Dorsolateral prefrontal cortex (tissue), 120 donors: ENCODE measurements at regions of chr4 and their contacts with region 1.

Region 1: DNA sequence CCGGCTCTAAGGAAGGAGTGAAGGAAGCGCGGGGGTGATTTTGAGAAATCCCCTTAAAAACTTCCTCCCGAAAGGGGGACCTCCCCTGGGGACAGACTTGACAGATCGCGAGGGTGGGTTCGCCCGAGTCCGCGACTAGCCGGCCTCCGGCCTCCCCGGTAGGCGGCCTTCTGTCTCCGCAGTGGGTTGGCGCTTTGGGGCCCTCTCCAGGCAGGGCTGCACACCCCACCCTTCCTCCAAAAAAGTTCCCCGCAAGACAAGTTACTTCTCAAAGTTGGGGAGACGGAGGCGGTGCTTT is 24.8 kb downstream of the HOPX start:
- DNase-seq: peak in 3 of 10 donors; percentile 26 to 51 (median 44)
- H3K4me3 ChIP-seq: peak overlapping the region; percentile 35 to 78 (median 65)
- H3K27ac ChIP-seq: peak overlapping the region in 57 of 59 donors; percentile 21 to 95 (median 82)
- H3K27me3 ChIP-seq: peaks cover 0 to 40% (median 0%) of the 10 kb centered on the region in 45 donors
- CTCF ChIP-seq: peak in 25 of 56 donors; percentile 7 to 37 (median 15)

Region 2: DNA sequence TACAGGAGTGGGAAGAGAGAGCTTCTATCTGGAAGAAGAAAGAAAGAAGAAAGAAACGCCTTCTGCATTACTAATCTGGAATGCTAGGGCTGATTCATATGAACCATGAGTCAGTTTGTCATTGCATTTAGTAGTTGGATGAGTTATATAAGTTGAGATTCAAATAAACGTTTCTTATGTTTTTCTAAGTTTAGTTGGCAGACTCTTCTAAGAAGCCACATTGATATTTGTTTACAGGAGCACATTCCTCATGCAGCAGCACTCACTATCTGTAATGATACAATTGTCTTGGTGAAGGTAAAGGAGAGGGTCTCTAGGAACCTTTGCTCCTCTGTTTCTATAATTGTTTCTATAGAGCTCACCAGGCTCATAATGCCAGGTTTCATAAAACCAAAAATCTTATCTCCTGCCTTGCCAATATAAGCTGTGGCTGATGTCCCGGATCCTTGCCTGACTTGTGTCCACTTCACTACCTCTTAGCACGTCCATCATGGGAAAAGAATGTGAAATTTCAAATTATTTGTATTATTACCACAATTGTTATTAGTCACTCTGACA is 14.7 kb before region 1 on chr4:
- intact Hi-C with region 1: loop called in 1 of 2 experiments (anchors 2 kb)
- DNase-seq: no peak
- H3K4me3 ChIP-seq: no peak overlapping the region
- H3K27ac ChIP-seq: peak overlapping the region in 20 of 59 donors; percentile 2 to 83 (median 57)
- H3K27me3 ChIP-seq: no peaks in the 10 kb centered on the region
- CTCF ChIP-seq: peak in 1 of 56 donors; percentile 20

Region 3: DNA sequence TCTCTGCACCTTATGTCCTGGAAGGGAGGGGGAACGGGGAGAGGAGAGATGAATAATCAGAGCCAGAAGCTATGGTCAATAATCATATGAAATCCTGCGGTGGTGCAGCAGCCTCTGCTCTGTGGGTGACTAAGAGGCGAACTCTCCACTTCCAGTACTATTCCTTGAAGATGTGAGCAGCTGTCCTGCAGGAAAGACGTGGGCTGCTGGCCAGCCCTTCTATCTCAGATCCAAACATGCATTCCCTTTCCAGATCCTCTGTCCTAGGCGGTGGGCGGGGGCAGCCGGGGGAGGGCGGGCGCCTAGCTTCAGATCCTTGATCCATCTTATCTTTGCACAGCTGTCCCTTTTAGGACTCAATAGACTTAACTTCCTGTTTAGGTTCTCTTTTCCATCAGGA is 130.7 kb after region 1 on chr4:
- intact Hi-C with region 1: loop called in 1 of 2 experiments (anchors 2 kb)
- DNase-seq: peak in 8 of 10 donors; percentile 20 to 72 (median 58)
- H3K4me3 ChIP-seq: no peak overlapping the region
- H3K27ac ChIP-seq: peak overlapping the region in 23 of 59 donors; percentile 5 to 78 (median 53)
- H3K27me3 ChIP-seq: no peaks in the 10 kb centered on the region
- CTCF ChIP-seq: no peak